Heart right ventricle (tissue), 16 donors: ENCODE measurements at regions of chr13 and their contacts with region 1.

Region 1: GRCh38 chr13:114078461-114079451 is 53.7 kb downstream of the RASA3 start:
- DNase-seq: no peak
- ATAC-seq: peak; percentile 48 to 83 (median 70)
- H3K4me3 ChIP-seq: no peak overlapping the region
- H3K27ac ChIP-seq: peak overlapping the region in 8 of 10 donors; percentile 24 to 52 (median 42)
- H3K4me1 ChIP-seq: peaks cover 0 to 19% (median 3%) of the 10 kb centered on the region in 9 donors
- H3K27me3 ChIP-seq: no peaks in the 10 kb centered on the region
- CTCF ChIP-seq: no peak

Region 2: DNA sequence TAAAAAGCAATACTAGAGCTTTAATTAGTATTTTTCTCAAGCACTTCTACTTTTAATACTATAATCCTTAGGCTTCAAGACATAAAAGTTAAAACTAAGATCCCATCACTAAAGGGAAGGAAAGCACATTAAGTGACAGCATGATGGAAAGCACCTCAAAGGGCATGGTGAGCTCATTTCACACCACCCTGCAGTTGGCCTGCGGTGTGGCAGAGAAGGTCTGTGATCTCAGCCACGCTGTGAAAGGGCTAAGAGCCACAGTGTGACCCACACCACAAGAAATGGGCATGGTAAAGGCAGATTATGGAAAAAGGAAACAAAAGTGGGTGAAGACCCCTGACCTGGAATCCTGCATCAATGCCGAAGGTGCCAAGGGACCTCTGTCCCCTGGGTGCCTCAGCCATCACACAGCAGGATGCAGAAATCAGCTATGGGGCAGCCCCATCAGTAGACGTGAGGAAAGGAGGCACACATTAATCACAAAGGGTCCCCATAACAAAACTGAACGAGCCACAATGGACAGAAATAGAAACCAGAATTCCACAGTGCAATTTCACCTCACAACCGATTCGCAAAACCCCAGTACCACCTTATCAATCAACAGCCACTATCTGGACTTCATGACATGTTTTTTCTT is 1524.4 kb before region 1 on chr13:
- intact Hi-C with region 1: loop called in 1 of 10 experiments (anchors 5 kb)
- DNase-seq: no peak
- ATAC-seq: no peak
- H3K4me3 ChIP-seq: no peak overlapping the region
- H3K27ac ChIP-seq: no peak overlapping the region
- H3K4me1 ChIP-seq: peaks cover 0 to 17% (median 0%) of the 10 kb centered on the region in 9 donors
- H3K27me3 ChIP-seq: no peaks in the 10 kb centered on the region
- CTCF ChIP-seq: no peak

Region 3: GRCh38 chr13:113874579-113875428 is 204.0 kb before region 1 on chr13:
- intact Hi-C with region 1: no loop called
- DNase-seq: no peak
- ATAC-seq: no peak
- H3K4me3 ChIP-seq: no peak overlapping the region
- H3K27ac ChIP-seq: no peak overlapping the region
- H3K4me1 ChIP-seq: peaks cover 2 to 15% (median 11%) of the 10 kb centered on the region in 9 donors
- H3K27me3 ChIP-seq: peaks cover 0 to 10% (median 0%) of the 10 kb centered on the region in 7 donors
- CTCF ChIP-seq: no peak

Region 4: DNA sequence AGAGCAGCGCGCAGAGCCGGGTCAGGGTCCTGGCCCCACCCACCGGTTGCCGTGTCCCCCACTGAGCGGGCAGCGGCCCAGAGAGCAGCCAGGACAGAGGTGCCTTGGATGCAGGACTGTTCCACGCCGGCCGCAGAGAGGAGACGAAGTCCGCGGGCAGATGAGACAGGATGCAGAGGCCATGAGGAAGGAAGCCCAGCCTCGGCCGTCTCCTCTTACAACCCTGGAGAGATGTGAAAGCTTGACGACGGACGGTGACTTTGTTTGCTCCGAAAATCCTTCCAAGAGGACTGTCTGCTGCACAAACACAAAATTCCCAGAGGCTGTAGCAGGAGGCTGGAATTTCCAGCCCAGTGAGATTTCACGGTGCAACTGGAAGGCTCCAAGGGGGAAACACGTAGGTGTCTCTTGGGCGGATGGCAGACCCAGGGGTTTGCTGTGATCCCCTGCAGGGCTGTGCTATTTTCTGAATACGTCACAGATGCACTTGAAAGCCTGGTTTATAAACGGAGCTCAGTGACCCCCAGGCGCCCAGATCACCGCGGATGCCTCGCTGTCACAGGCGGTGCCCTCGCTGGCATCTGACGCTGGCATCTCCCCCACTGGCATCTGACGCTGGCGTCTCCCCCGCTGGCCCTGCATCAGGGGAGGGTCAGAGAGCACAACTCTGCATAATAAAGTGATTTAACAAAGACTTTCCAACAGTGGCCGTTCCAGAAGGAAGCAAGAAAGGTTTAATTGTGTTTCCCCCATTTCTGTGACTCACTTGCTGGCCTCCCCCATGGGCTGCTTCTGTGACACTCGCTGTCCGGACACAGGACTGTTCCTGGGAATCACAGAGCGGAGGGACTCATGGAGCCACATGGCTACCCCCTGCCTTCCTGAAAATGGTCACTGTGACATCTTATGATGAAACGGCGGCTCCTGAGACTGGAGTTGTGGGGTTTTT is 42.9 kb before region 1 on chr13:
- intact Hi-C with region 1: no loop called
- DNase-seq: no peak
- ATAC-seq: peak in 7 of 8 donors; percentile 11 to 70 (median 51)
- H3K4me3 ChIP-seq: no peak overlapping the region
- H3K27ac ChIP-seq: peak overlapping the region in 4 of 10 donors; percentile 16 to 36 (median 26)
- H3K4me1 ChIP-seq: peaks cover 6 to 50% (median 24%) of the 10 kb centered on the region in 9 donors
- H3K27me3 ChIP-seq: no peaks in the 10 kb centered on the region
- CTCF ChIP-seq: peak in 3 of 9 donors; percentile 7 to 13 (median 13)

Region 5: DNA sequence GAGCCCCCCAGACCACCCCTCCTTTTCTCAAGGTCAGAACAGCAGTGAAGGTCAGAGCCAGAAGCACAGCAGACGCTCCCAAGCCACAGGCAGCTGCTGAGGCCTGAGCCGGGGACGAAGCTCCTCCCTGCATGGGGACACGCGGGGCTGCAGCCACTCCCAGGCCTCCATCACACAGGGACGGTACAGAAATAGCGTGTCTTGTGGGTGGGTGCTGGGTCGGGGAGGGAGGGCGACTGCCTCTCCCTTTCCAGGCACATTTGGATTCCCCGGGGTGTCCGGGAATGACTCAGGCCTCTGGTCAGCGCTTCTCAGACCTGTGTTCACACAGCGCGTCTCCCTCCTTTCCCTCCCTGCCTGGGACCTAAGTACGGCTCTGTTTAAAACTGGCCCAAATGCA is 20.4 kb after region 1 on chr13:
- intact Hi-C with region 1: no loop called
- DNase-seq: peak; percentile 70 to 89
- ATAC-seq: peak; percentile 88 to 94 (median 90)
- H3K4me3 ChIP-seq: no peak overlapping the region
- H3K27ac ChIP-seq: peak overlapping the region in 8 of 10 donors; percentile 56 to 80 (median 66)
- H3K4me1 ChIP-seq: peaks cover 9 to 33% (median 19%) of the 10 kb centered on the region in 9 donors
- H3K27me3 ChIP-seq: no peaks in the 10 kb centered on the region
- CTCF ChIP-seq: no peak